Ovary (tissue), 10 donors: ENCODE measurements at regions of chr1 and their contacts with region 1.

Region 1: GRCh38 chr1:156154317-156154749 is 948 bp downstream of the SEMA4A start:
- DNase-seq: no peak
- H3K4me3 ChIP-seq: no peak overlapping the region
- H3K27ac ChIP-seq: no peak overlapping the region
- H3K4me1 ChIP-seq: no peaks in the 10 kb centered on the region
- H3K27me3 ChIP-seq: no peaks in the 10 kb centered on the region
- CTCF ChIP-seq: no peak
- EP300 ChIP-seq: no peak
- POLR2A ChIP-seq: no peak

Region 2: GRCh38 chr1:156042828-156043227 is 111.5 kb before region 1 on chr1:
- intact Hi-C with region 1: no loop called
- DNase-seq: no peak
- H3K4me3 ChIP-seq: no peak overlapping the region
- H3K27ac ChIP-seq: no peak overlapping the region
- H3K4me1 ChIP-seq: peaks cover 2% of the 10 kb centered on the region
- H3K27me3 ChIP-seq: no peaks in the 10 kb centered on the region
- CTCF ChIP-seq: no peak
- EP300 ChIP-seq: no peak
- POLR2A ChIP-seq: no peak

Region 3: GRCh38 chr1:156226116-156226538 is 71.8 kb after region 1 on chr1:
- intact Hi-C with region 1: loop called in 1 of 4 experiments (anchors 5 kb)
- DNase-seq: no peak
- H3K4me3 ChIP-seq: no peak overlapping the region
- H3K27ac ChIP-seq: no peak overlapping the region
- H3K4me1 ChIP-seq: no peaks in the 10 kb centered on the region
- H3K27me3 ChIP-seq: no peaks in the 10 kb centered on the region
- CTCF ChIP-seq: no peak
- EP300 ChIP-seq: no peak
- POLR2A ChIP-seq: no peak